Lower leg skin (tissue), 4 donors: ENCODE measurements at regions of chr7 and their contacts with region 1.

Region 1: DNA sequence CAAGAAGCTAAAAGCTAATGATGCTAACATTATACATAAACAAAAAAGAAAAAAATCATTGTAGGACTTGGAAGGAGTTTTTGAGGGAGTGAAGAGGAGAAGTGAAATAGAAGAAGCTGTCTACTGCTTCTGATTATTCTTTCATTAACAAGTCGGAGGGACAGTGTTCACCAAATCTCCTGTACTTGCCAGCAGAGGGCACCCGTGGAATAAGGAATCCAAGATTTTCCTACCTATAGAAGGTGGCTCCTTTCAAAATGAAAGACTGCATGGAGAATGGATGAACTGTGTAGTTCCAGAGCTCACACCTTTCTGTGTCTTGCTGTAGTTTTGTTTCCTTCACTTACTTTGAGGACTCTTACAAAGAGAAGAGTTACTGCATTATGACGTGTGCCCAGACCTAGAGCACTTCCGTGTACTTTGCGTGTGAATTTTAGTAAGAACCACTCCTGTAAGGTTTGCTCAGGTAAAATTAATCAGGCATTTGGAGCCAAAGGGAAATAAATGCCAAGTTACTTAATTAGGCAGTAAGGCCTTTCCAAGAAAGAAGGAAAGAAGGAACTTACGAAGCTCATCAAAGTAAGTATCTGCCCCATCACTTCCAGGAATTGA is 145.1 kb downstream of the SEMA3D start:
- DNase-seq: peak; percentile 59 to 92
- H3K4me3 ChIP-seq: no peak overlapping the region
- CTCF ChIP-seq: peak in 1 of 3 donors; percentile 52
- POLR2A ChIP-seq: no peak

Region 2: DNA sequence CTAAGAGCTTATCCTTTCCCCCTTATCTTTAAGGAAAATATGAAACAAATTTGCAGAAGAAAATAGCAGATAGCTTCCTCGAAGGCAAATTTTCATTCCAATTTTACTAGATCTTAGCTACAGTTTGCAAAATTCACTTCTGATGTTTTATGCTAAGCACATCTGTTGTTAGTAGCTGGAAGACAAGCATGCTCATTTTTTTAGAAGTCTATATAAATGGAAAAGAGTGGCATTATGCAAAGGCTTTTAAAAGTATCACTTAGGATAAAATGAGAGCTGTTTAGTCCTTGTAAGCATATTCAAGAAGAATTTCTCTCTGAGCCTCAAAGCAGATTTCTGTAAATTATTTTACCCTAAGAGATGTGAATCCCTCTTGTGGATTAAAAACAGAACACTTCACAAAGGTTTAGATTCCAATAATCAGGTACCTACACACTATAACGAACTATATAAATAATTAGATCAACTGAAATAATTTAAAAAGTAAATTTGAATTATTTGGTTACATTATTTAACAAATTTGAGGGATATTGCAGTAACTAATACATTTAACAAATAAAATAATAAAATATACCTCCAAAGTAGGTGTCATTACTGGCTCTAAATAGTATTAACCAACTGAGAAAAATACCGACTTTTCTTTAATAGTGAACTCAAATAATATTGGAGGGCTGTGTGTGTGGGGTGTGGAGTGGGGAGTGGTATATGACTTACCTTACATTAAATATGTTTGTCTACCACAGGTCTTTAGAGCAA is 162.0 kb before region 1 on chr7:
- intact Hi-C with region 1: no loop called
- DNase-seq: no peak
- H3K4me3 ChIP-seq: no peak overlapping the region
- CTCF ChIP-seq: no peak
- POLR2A ChIP-seq: no peak

Region 3: GRCh38 chr7:85554236-85555178 is 512.8 kb after region 1 on chr7:
- intact Hi-C with region 1: loop called (anchors 10 kb)
- DNase-seq: peak in 1 of 2 donors; percentile 40
- H3K4me3 ChIP-seq: no peak overlapping the region
- CTCF ChIP-seq: peak in 1 of 3 donors; percentile 24
- POLR2A ChIP-seq: no peak